Ovary (tissue), 10 donors: ENCODE measurements at regions of chr15 and their contacts with region 1.

Region 1: DNA sequence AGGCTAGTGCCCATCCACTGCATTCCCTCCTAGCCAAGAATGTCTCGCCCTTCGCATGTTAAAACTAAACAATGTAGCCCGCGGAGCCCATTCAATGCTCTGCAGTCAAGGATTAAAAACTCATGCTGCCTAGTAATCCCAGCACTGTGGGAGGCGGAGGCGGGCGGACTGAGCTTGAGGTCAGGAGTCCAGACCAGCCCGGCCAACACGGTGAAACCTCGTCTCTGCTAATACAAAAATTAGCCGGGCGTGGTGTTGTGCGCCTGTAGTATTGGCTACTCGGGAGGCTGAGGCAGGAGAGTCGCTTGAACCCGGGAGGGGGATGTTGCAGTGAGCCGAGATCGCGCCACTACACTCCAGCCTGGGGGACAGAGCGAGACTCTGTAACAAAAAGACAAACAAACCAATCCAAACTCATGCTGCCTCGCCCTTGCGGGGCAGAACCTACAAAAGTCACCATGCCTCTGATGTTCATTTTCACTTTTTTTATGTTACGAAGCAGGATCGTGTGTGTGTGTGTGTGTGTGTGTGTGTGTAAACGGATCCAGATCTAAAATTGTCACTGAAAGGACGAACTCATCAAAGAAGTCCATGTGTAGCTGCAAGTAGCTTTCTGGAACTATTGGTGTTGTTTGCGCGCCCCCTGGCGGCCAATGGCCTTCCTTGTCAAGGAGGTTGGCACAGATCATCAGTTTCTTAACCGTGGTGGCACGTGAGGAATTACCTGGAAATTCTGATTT is 54.8 kb upstream of the SPESP1 start:
- DNase-seq: peak; percentile 87 to 95 (median 94)
- H3K4me3 ChIP-seq: peak overlapping the region; percentile 31
- H3K27ac ChIP-seq: no peak overlapping the region
- H3K4me1 ChIP-seq: no peaks in the 10 kb centered on the region
- H3K27me3 ChIP-seq: no peaks in the 10 kb centered on the region
- CTCF ChIP-seq: peak; percentile 72 to 92 (median 90)
- EP300 ChIP-seq: no peak
- POLR2A ChIP-seq: no peak

Region 2: DNA sequence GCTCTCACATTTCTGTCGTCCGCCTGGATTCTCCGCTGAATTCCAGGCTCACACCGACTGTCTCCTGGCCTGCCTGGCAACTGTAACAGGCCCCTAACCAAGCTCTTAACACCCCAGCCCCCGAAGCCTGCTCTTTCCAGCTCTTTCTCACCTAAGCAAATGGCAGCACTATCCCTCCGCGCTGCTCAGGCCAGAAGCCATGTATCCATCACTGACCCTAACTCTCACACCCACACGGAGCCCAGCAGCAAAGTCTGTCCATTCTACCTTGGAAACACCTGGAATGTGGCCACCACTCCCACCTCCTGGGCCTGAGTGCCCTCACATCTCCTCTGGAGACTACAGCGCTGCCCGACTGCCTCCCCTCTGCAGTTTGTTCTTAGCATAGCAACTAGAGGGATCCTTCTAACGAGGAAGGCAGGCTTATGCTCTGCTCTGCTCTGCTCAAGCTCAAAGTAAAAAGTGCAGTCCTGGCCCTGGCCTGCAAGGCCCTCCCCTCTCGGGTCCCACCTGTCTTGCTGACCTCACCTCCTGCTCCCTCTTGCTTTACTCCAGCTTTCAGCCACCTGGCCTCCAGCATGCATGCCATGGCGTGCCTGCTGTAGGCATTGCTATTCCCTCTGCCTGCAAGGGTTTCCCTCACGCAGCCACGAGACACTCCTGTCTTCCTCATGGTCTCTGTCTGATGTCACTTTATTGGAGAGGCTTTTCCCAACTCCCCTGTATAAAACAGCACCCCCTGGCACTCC is 570.8 kb before region 1 on chr15:
- intact Hi-C with region 1: loop called in 1 of 4 experiments (anchors 10 kb)
- DNase-seq: peak in 2 of 5 donors; percentile 1 to 10
- H3K4me3 ChIP-seq: no peak overlapping the region
- H3K27ac ChIP-seq: no peak overlapping the region
- H3K4me1 ChIP-seq: no peaks in the 10 kb centered on the region
- H3K27me3 ChIP-seq: no peaks in the 10 kb centered on the region
- CTCF ChIP-seq: no peak
- EP300 ChIP-seq: no peak
- POLR2A ChIP-seq: no peak

Region 3: GRCh38 chr15:68559345-68560310 is 315.9 kb before region 1 on chr15:
- intact Hi-C with region 1: loop called in 3 of 4 experiments (anchors 5 kb)
- DNase-seq: peak; percentile 80 to 91 (median 85)
- H3K4me3 ChIP-seq: peak overlapping the region; percentile 43
- H3K27ac ChIP-seq: peak overlapping the region in 1 of 2 donors; percentile 36
- H3K4me1 ChIP-seq: peaks cover 7% of the 10 kb centered on the region
- H3K27me3 ChIP-seq: no peaks in the 10 kb centered on the region
- CTCF ChIP-seq: peak; percentile 93 to 97 (median 97)
- EP300 ChIP-seq: no peak
- POLR2A ChIP-seq: no peak

Region 4: DNA sequence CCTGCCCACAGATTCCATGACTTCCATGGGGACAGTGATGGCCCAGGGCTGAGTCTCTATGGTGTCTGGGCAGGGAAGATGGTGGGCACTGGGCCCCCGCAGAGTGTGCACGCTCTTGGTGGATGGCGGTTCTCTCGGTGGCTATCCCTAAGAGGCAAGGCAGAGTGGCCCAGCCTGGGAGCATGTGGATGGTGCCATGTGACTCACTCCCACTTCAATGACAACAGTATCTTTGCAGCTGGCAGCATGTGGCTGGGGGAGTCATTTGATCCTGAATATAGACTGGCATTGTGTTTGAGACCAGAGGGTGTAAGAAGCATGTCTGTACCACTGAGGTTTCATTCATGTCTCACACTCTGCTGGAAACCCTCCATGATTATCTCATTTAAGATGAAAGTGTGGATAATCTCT is 195.6 kb before region 1 on chr15:
- intact Hi-C with region 1: loop called in 2 of 4 experiments (anchors 10 kb)
- DNase-seq: peak in 2 of 5 donors; percentile 7 to 8
- H3K4me3 ChIP-seq: no peak overlapping the region
- H3K27ac ChIP-seq: no peak overlapping the region
- H3K4me1 ChIP-seq: peaks cover 3% of the 10 kb centered on the region
- H3K27me3 ChIP-seq: no peaks in the 10 kb centered on the region
- CTCF ChIP-seq: no peak
- EP300 ChIP-seq: no peak
- POLR2A ChIP-seq: no peak

Region 5: GRCh38 chr15:68924866-68925560 is 49.5 kb after region 1 on chr15:
- intact Hi-C with region 1: no loop called
- DNase-seq: peak; percentile 62 to 85 (median 73)
- H3K4me3 ChIP-seq: no peak overlapping the region
- H3K27ac ChIP-seq: no peak overlapping the region
- H3K4me1 ChIP-seq: no peaks in the 10 kb centered on the region
- H3K27me3 ChIP-seq: no peaks in the 10 kb centered on the region
- CTCF ChIP-seq: peak; percentile 24 to 48 (median 46)
- EP300 ChIP-seq: no peak
- POLR2A ChIP-seq: no peak